Natural killer cell (primary cell): ENCODE measurements at regions of chr6 and their contacts with region 1.

Region 1: GRCh38 chr6:111743862-111744692 is 129.2 kb downstream of the FYN start:
- DNase-seq: no peak
- ATAC-seq: no peak
- H3K4me3 ChIP-seq: no peak overlapping the region
- H3K4me3 Mint-ChIP-seq: peak overlapping the region; percentile 42
- H3K27ac ChIP-seq: peak overlapping the region; percentile 16
- H3K27ac Mint-ChIP-seq: peak overlapping the region; percentile 90 to 100
- H3K4me1 ChIP-seq: peaks cover 71% of the 10 kb centered on the region
- H3K4me1 Mint-ChIP-seq: peaks cover 95 to 97% of the 10 kb centered on the region in 2 donors
- H3K27me3 ChIP-seq: no peaks in the 10 kb centered on the region
- H3K27me3 Mint-ChIP-seq: no peaks in the 10 kb centered on the region
- CTCF ChIP-seq: no peak

Region 2: DNA sequence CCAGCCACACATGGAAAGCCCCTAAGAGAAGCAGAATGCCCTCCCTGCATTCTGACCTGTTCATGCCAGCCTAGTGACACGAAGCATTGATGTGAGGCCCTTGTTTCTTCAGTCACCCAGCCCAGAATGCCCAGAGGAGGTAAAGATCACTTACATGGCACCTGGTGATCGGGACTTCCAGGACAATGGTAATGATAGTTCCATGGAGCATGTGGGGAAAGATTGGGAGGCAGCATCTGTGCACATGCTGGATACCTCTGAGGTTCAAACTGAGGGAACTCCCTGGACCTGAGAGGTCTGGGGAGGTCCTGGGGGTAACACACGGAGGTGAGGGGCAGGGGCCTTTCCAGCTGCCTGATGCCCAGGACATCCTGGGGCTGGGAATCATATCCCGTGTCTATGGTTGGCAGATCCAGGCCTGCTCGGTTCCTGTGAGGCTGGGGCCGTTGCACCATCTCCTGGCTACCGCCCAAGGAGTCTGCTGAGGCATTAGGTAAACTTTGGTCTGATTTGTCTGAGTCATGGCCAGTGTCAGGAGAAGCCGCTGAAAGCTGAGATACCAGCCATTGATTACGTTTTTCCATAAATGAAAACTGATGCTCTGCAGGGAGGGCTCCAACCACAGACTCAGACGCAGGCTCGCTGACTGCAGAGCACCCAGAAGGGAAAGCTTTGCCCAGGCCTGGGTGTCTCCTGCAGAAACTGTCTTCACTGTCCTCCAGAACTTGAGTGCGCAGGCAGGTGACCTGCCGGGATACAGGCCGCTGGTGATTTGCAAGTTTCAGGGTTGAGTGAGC is 152.8 kb before region 1 on chr6:
- intact Hi-C with region 1: no loop called
- DNase-seq: no peak
- ATAC-seq: no peak
- H3K4me3 ChIP-seq: no peak overlapping the region
- H3K4me3 Mint-ChIP-seq: no peak overlapping the region
- H3K27ac ChIP-seq: no peak overlapping the region
- H3K27ac Mint-ChIP-seq: no peak overlapping the region
- H3K4me1 ChIP-seq: no peaks in the 10 kb centered on the region
- H3K4me1 Mint-ChIP-seq: peaks cover 13 to 21% of the 10 kb centered on the region in 2 donors
- H3K27me3 ChIP-seq: no peaks in the 10 kb centered on the region
- H3K27me3 Mint-ChIP-seq: no peaks in the 10 kb centered on the region
- CTCF ChIP-seq: no peak

Region 3: GRCh38 chr6:111731456-111732195 is 12.5 kb before region 1 on chr6:
- intact Hi-C with region 1: loop called (anchors 1 kb)
- DNase-seq: peak; percentile 48 to 55
- ATAC-seq: peak; percentile 63 to 82 (median 74)
- H3K4me3 ChIP-seq: no peak overlapping the region
- H3K4me3 Mint-ChIP-seq: peak overlapping the region; percentile 62
- H3K27ac ChIP-seq: peak overlapping the region; percentile 84
- H3K27ac Mint-ChIP-seq: peak overlapping the region; percentile 90 to 100
- H3K4me1 ChIP-seq: peaks cover 77% of the 10 kb centered on the region
- H3K4me1 Mint-ChIP-seq: peaks cover 93 to 96% of the 10 kb centered on the region in 2 donors
- H3K27me3 ChIP-seq: no peaks in the 10 kb centered on the region
- H3K27me3 Mint-ChIP-seq: no peaks in the 10 kb centered on the region
- CTCF ChIP-seq: no peak

Region 4: DNA sequence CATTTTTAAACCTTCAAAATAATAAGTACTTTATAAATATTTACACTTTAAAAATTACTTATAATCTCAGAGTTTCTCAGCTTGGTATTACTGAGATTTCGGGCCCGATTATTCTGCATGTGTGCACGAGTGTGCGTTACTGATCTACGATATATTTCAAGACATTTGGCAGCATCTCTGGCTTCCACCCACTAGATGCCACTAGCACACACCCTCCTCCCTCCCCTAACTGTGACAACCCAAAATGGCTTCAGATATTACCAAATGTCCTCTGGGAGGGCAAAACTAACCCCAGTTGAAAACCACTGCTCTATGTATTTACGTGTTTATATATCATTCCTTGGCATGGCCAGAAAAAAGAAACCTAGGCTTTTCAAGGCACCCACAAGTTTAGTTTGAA is 33.3 kb after region 1 on chr6:
- intact Hi-C with region 1: loop called (anchors 5 kb)
- DNase-seq: peak in 1 of 2 donors; percentile 78
- ATAC-seq: peak; percentile 61 to 77 (median 70)
- H3K4me3 ChIP-seq: no peak overlapping the region
- H3K4me3 Mint-ChIP-seq: peak overlapping the region; percentile 68
- H3K27ac ChIP-seq: peak overlapping the region; percentile 67
- H3K27ac Mint-ChIP-seq: peak overlapping the region; percentile 99 to 100
- H3K4me1 ChIP-seq: peaks cover 68% of the 10 kb centered on the region
- H3K4me1 Mint-ChIP-seq: peaks cover 88 to 90% of the 10 kb centered on the region in 2 donors
- H3K27me3 ChIP-seq: no peaks in the 10 kb centered on the region
- H3K27me3 Mint-ChIP-seq: no peaks in the 10 kb centered on the region
- CTCF ChIP-seq: peak; percentile 30